CD4-positive, alpha-beta memory T cell (primary cell): ENCODE measurements at regions of chr11 and their contacts with region 1.

Region 1: GRCh38 chr11:74255741-74256369 is 55.6 kb downstream of the P4HA3 start:
- DNase-seq: peak; percentile 39 to 62 (median 52)
- H3K4me3 ChIP-seq: no peak overlapping the region
- H3K4me3 Mint-ChIP-seq: no peak overlapping the region
- H3K27ac ChIP-seq: no peak overlapping the region
- H3K27ac Mint-ChIP-seq: peak overlapping the region in 2 of 7 donors; percentile 15 to 23
- H3K4me1 ChIP-seq: no peaks in the 10 kb centered on the region
- H3K4me1 Mint-ChIP-seq: peaks cover 0 to 7% (median 4%) of the 10 kb centered on the region in 4 donors
- H3K27me3 ChIP-seq: no peaks in the 10 kb centered on the region
- H3K27me3 Mint-ChIP-seq: no peaks in the 10 kb centered on the region

Region 2: DNA sequence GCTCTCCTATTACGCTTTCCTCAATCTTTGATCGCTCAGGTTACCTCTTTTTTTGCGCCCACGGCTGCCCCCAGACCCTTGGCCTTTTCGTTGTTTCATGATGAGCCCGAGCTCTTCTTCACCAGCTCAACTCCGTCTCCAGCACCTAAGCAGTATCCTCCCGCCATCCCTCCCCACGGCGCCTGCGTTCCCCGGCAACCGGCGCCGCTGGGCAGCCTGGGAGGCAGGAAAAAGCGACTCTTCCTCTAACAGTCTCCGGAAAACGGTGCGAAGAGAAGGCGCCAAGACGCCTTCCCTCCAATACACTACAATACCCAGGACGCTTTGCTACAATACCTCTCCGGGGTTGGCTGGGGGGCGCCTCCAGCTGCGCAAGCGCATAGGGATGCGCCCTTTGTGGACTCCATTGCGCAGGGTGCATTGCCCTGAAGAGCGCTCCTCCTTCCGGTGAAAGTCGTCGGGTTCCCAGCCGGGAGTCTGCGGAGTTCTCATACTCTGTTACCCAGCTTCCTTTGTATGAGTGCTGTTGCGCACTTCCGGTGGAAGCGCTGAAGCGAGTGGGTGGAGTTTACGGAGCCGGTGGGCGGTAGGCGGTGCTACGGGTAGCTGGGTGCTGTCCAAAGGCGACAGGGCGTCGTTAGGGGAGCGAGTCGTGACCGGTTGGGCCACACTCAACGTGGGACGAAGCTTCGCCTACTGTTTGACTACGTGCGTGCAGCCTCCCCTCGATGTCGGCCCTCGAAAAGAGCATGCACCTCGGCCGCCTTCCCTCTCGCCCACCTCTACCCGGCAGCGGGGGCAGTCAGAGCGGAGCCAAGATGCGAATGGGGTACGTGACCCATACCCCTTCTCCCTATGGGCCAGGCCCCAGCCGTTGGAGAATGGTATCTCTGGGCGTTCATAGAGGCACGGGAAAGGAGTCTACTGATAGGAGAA is 84.9 kb before region 1 on chr11 and contains the starts of genes C2CD3 and PPME1:
- CTCF ChIA-PET with region 1: interaction called, 12 read pairs
- POLR2A ChIA-PET with region 1: no interaction called
- intact Hi-C with region 1: no loop called
- DNase-seq: peak; percentile 97 to 99 (median 99)
- H3K4me3 ChIP-seq: peak within 1 kb of the TSS; percentile 74 to 86
- H3K4me3 Mint-ChIP-seq: no peak within 1 kb of the TSS
- H3K27ac ChIP-seq: peak within 1 kb of the TSS; percentile 70
- H3K27ac Mint-ChIP-seq: no peak within 1 kb of the TSS
- H3K4me1 ChIP-seq: peaks cover 40% of the 10 kb centered on the region
- H3K4me1 Mint-ChIP-seq: peaks cover 18 to 22% (median 18%) of the 10 kb centered on the region in 4 donors
- H3K27me3 ChIP-seq: no peaks in the 10 kb centered on the region
- H3K27me3 Mint-ChIP-seq: no peaks in the 10 kb centered on the region
- total RNA-seq, gene C2CD3: 41.9 to 52.7 TPM
- total RNA-seq, gene PPME1: 20.7 to 21.9 TPM

Region 3: DNA sequence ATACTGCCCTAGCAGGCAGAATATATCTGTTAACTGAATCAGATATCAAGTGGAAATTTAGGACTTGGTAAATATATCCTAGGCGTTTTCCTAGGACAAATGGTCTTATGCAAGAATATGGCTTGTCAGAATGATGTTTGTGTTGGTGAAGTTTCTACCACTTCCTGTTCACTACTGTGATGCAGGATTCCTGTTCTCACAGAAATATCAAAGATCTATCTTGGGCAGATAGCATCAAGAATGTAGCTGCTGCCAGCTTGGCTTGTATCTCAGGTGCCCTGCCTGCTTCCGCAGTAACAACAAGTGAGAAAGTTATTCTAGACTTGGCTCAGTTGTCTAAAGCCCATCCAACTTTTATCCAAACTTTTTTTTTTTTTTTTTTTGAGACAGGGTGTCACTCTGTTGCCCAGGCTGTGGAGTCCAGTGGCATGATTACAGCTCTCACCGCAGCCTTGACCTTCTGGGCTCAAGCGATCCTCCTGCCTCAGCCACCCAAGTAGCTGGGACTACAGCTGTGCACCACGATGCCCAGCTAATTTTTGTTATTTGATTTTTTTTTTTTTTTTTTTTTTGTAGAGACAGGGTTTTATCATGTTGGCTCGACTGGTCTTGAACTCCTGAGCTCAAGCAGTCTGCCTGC is 23.4 kb before region 1 on chr11:
- CTCF ChIA-PET with region 1: interaction called, 10 read pairs
- POLR2A ChIA-PET with region 1: interaction called, 4 read pairs
- intact Hi-C with region 1: loop called (anchors 1 kb)
- DNase-seq: peak; percentile 46 to 68 (median 52)
- H3K4me3 ChIP-seq: peak overlapping the region in 1 of 2 donors; percentile 16
- H3K4me3 Mint-ChIP-seq: peak overlapping the region in 7 of 8 donors; percentile 0 to 64 (median 21)
- H3K27ac ChIP-seq: peak overlapping the region; percentile 29
- H3K27ac Mint-ChIP-seq: peak overlapping the region in 6 of 7 donors; percentile 27 to 96 (median 90)
- H3K4me1 ChIP-seq: peaks cover 32% of the 10 kb centered on the region
- H3K4me1 Mint-ChIP-seq: peaks cover 13 to 24% (median 17%) of the 10 kb centered on the region in 4 donors
- H3K27me3 ChIP-seq: no peaks in the 10 kb centered on the region
- H3K27me3 Mint-ChIP-seq: no peaks in the 10 kb centered on the region

Region 4: DNA sequence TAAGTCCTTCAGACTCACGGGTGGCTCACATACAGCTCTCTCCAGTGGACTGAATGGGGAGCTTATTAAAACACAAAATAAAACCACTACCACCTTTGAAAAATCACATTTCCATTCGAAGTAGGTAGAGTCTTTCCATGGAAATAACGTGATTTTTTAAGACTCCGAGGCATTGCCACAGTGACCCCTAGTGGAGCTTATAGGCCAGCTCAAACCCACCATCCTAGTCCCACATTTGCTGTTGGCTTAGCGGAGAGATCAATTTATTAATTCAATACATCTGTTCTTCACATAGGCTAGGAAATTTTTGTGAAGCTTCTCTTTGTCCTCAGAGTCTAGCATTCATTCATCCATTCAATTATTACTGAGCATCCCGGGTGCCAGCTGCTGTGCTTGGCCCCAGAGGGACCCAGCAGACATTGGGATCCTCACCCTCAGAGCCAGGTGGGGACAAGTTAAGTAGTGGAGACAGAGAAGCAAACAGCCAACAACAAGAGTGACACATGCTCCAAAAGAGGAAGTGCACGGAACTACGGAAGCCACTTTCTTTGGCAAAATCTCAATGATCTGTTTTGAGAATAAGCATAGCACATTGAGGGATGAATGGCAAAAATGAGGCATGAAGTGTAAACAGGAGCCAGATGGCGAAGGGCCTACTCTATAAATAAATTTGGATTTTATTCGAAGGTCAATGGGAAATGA is 65.8 kb after region 1 on chr11:
- CTCF ChIA-PET with region 1: interaction called, 14 read pairs
- POLR2A ChIA-PET with region 1: no interaction called
- intact Hi-C with region 1: loop called (anchors 1 kb)
- DNase-seq: peak in 3 of 5 donors; percentile 3 to 17 (median 8)
- H3K4me3 ChIP-seq: no peak overlapping the region
- H3K4me3 Mint-ChIP-seq: no peak overlapping the region
- H3K27ac ChIP-seq: no peak overlapping the region
- H3K27ac Mint-ChIP-seq: no peak overlapping the region
- H3K4me1 ChIP-seq: no peaks in the 10 kb centered on the region
- H3K4me1 Mint-ChIP-seq: peaks cover 0 to 3% (median 0%) of the 10 kb centered on the region in 4 donors
- H3K27me3 ChIP-seq: peaks cover 7% of the 10 kb centered on the region
- H3K27me3 Mint-ChIP-seq: peaks cover 10% of the 10 kb centered on the region in 2 donors

Region 5: GRCh38 chr11:74388678-74389327 is 132.9 kb after region 1 on chr11:
- CTCF ChIA-PET with region 1: interaction called, 3 read pairs
- POLR2A ChIA-PET with region 1: no interaction called
- intact Hi-C with region 1: loop called (anchors 5 kb)
- DNase-seq: peak; percentile 63 to 77 (median 70)
- H3K4me3 ChIP-seq: no peak overlapping the region
- H3K4me3 Mint-ChIP-seq: peak overlapping the region in 4 of 8 donors; percentile 17 to 53 (median 46)
- H3K27ac ChIP-seq: no peak overlapping the region
- H3K27ac Mint-ChIP-seq: peak overlapping the region in 6 of 7 donors; percentile 43 to 86 (median 68)
- H3K4me1 ChIP-seq: peaks cover 19% of the 10 kb centered on the region
- H3K4me1 Mint-ChIP-seq: peaks cover 23 to 32% (median 25%) of the 10 kb centered on the region in 4 donors
- H3K27me3 ChIP-seq: no peaks in the 10 kb centered on the region
- H3K27me3 Mint-ChIP-seq: no peaks in the 10 kb centered on the region

Region 6: DNA sequence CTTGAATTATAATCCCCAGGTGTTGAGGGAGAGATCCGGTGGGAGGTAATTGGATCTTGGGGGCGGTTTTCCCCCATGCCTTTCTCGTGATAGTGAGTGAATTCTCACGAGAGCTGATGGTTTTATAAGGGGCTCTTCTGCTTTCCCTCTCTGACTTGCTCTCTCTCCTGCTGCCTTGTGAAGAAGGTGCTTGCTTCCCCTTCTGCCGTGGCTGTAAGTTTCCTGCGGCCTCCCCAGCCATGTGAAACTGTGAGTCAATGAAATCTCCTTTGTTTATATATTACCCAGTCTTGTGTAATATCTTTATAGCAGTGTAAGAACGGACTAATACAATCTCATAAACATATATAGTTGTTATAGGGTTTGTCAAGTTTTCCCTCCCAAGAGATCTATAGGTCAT is 178.7 kb after region 1 on chr11:
- CTCF ChIA-PET with region 1: no interaction called
- POLR2A ChIA-PET with region 1: no interaction called
- intact Hi-C with region 1: no loop called
- DNase-seq: no peak
- H3K4me3 ChIP-seq: no peak overlapping the region
- H3K4me3 Mint-ChIP-seq: no peak overlapping the region
- H3K27ac ChIP-seq: no peak overlapping the region
- H3K27ac Mint-ChIP-seq: no peak overlapping the region
- H3K4me1 ChIP-seq: no peaks in the 10 kb centered on the region
- H3K4me1 Mint-ChIP-seq: no peaks in the 10 kb centered on the region
- H3K27me3 ChIP-seq: no peaks in the 10 kb centered on the region
- H3K27me3 Mint-ChIP-seq: peaks cover 2 to 4% of the 10 kb centered on the region in 2 donors